Heart left ventricle (tissue), 16 donors: ENCODE measurements at regions of chr9 and their contacts with region 1.

Region 1: DNA sequence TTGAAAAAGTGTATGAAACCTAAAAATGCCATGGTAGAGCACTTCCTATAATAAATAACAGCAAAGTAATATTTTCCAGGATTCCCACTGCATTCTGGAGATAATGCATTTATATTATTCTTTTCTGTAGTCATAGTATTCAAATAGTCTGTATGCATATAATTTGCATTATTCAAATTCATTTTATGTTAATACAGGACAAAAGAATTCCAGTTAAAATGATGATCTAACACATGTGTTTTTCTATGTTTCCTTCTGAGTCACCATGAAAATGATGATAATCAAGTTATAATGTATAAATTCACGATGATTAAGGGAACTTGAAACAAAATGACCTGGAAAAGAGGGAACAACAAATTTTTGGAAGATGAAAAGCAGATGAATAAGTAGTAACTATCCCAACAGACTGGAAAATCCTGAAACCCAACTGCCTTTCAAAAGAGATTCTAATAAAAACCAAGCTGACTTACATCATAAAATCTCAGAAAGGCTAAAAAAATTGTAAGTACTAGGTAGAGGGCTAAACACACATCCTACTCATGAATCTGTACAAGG is 358.6 kb upstream of the PAPPA start:
- DNase-seq: no peak
- ATAC-seq: no peak
- H3K4me3 ChIP-seq: no peak overlapping the region
- H3K27ac ChIP-seq: no peak overlapping the region
- H3K4me1 ChIP-seq: no peaks in the 10 kb centered on the region
- H3K27me3 ChIP-seq: peaks cover 0 to 5% (median 0%) of the 10 kb centered on the region in 9 donors
- CTCF ChIP-seq: no peak
- POLR2A ChIP-seq: no peak

Region 2: GRCh38 chr9:115633104-115633503 is 161.9 kb before region 1 on chr9:
- intact Hi-C with region 1: no loop called
- DNase-seq: no peak
- ATAC-seq: no peak
- H3K4me3 ChIP-seq: no peak overlapping the region
- H3K27ac ChIP-seq: no peak overlapping the region
- H3K4me1 ChIP-seq: no peaks in the 10 kb centered on the region
- H3K27me3 ChIP-seq: no peaks in the 10 kb centered on the region
- CTCF ChIP-seq: no peak
- POLR2A ChIP-seq: no peak

Region 3: GRCh38 chr9:115808108-115808507 is 13.1 kb after region 1 on chr9:
- intact Hi-C with region 1: loop called in 1 of 10 experiments (anchors 2 kb)
- DNase-seq: no peak
- ATAC-seq: no peak
- H3K4me3 ChIP-seq: no peak overlapping the region
- H3K27ac ChIP-seq: no peak overlapping the region
- H3K4me1 ChIP-seq: no peaks in the 10 kb centered on the region
- H3K27me3 ChIP-seq: no peaks in the 10 kb centered on the region
- CTCF ChIP-seq: no peak
- POLR2A ChIP-seq: no peak